PC-3 (cell line): ENCODE measurements at regions of chr1 and their contacts with region 1.

Region 1: DNA sequence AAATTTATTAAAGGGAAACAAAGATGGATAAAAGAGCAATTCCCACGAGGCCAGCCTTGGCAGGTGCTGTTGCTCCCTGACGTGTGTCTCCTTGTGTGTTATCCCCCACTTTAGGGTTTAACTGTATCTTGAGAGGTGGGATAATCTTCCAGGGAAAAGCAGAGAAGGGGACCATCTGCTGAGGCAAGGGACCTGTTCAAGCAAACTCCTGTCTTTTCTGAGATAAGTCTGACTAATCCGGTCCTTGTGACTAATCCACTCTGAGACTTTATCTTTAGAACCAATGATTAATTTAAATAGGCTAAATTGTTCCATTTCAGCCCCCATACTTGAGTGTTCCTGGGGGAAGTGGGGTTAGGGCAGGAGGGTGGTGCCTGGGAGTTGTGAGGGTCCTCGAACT is 163.6 kb downstream of the CAMTA1 start:
- DNase-seq: peak; percentile 15
- ATAC-seq: no peak
- H3K4me3 ChIP-seq: no peak overlapping the region
- H3K27ac ChIP-seq: no peak overlapping the region
- H3K4me1 ChIP-seq: no peaks in the 10 kb centered on the region
- H3K27me3 ChIP-seq: no peaks in the 10 kb centered on the region
- CTCF ChIP-seq: no peak

Region 2: DNA sequence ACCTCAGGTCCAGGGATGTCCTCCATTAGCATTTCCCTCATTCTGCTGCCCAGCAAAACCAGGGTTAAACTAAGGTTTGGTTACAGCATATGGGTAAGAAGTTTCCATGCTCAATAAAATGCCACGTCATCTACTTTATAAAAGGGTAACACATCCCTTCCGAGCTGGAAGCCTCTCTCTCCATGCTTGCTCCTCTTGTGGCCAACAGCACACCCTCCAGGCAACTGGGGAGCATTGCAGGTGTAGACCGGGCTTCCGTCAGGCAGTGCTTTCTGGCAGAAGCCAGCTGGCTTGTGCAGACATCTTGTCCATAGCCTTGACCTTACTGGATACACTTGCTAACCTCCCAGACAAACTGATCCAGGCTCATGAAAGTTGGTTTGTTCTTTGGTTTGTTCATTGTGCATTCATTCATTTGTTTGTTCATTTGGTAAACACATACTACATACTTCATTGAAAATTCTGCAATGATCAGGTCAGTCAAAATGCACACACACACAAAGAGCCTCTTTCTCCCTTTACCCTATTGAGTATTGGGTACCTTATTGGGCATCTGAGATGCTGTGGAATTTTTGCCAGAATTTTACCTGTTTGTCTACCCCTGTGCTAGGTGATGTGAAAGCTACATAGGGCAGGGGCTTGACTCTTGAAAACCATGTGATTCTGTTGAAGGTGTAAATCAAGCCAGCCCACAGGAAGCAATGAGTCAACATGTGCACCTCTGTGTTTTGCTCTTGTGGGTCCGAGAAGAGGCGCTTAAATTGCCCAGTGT is 259.2 kb after region 1 on chr1:
- CTCF ChIA-PET with region 1: no interaction called
- POLR2A ChIA-PET with region 1: no interaction called
- intact Hi-C with region 1: loop called (anchors 5 kb)
- DNase-seq: peak; percentile 84
- ATAC-seq: peak; percentile 79
- H3K4me3 ChIP-seq: no peak overlapping the region
- H3K27ac ChIP-seq: no peak overlapping the region
- H3K4me1 ChIP-seq: no peaks in the 10 kb centered on the region
- H3K27me3 ChIP-seq: peaks cover 44% of the 10 kb centered on the region
- CTCF ChIP-seq: peak; percentile 86